HCT116 (cell line): ENCODE measurements at regions of chr2 and their contacts with region 1.

Region 1: DNA sequence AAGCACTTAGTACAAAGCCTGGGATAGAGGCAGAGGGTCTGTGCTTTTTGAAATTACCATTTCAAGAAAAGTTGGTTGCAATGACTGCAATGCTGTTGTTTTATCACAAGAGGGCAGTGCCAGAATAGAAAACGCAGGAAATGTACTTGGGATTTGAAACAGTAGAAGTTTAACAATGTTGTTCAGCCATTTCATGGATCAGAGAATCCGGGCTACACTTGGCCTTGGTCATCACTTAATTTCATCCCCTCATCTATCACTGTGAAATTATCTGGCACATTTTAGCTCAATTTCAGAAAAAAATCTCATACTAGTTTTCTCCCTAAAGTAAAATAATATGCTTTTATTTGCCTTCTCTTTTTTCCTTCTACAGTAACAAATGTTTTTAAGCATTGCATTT is 70.8 kb downstream of the RAPGEF4 start:
- DNase-seq: peak; percentile 37
- ATAC-seq: peak; percentile 62
- H3K4me3 ChIP-seq: no peak overlapping the region
- H3K27ac ChIP-seq: no peak overlapping the region
- H3K4me1 ChIP-seq: no peaks in the 10 kb centered on the region
- H3K27me3 ChIP-seq: no peaks in the 10 kb centered on the region
- CTCF ChIP-seq: peak; percentile 81 to 92 (median 88)
- POLR2A ChIP-seq: no peak
- RAD21 ChIP-seq: peak; percentile 90

Region 2: DNA sequence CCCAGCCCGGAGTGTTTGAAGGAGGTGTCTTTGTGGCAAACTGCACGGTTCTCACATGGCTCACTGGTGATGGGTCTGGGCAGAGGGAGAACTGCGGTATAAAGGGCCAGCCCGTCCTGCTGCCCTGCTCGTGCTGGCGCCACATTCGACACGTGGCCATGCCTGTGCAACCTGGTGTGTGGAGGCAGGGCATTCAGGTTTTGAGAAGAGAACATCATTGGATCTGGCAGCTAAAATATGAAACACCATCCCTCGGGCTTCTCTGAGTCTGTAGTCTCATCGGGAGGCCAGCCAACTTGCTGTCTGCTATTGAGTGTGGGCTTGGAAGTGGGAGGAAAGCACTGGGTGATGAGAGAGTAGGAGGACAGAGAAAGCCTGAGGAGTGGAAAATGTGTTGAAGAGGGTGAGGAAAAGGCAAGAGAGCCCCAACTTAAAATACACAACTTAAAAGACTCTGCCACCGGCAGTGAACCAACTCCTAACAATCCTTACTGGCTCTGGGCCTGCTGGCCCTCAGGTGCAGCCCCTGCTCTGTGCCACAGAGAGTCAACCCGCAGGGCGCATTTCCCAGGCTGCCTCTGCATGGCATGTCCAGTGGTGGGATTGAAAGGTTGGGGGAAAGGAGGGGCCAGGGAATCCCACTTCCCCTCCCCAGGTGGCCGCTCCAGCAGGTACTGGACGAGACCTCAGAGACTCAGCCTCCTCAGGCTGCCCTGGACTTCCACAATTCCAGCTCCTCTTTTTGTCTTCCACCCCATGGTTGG is 591.1 kb before region 1 on chr2:
- CTCF ChIA-PET with region 1: no interaction called
- POLR2A ChIA-PET with region 1: no interaction called
- RAD21 ChIA-PET with region 1: no interaction called
- intact Hi-C with region 1: no loop called
- DNase-seq: no peak
- ATAC-seq: no peak
- H3K4me3 ChIP-seq: no peak overlapping the region
- H3K27ac ChIP-seq: no peak overlapping the region
- H3K4me1 ChIP-seq: no peaks in the 10 kb centered on the region
- H3K27me3 ChIP-seq: no peaks in the 10 kb centered on the region
- CTCF ChIP-seq: no peak
- POLR2A ChIP-seq: no peak
- RAD21 ChIP-seq: no peak

Region 3: DNA sequence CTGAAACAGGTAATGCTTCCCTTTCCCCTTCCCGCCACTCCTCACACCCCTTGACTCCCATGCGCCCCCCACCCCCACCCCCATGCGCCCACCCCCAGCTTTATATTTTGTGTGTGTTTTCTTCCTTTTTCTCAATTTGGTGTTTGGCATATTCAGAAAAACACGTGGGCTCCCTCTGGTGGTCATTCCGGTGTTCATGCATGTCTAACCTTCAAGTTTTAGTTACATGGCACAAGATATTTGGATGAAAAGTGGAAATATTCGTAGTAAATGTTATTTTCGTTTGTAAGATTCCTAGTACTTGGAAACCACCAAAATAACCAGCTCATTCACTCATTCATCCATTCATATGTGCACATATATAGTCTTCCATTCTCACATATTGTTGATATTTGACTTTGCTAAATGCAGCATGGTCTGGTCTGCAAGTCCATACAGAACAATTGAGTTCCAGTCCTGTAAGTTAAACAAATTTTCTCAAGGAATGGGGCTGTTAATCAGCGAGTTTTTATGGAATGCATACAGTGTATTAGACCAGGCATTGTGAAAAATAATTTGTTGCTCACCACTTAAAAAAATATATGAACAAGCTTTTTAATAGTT is 125.5 kb after region 1 on chr2:
- CTCF ChIA-PET with region 1: interaction called, 24 read pairs
- POLR2A ChIA-PET with region 1: no interaction called
- RAD21 ChIA-PET with region 1: no interaction called
- intact Hi-C with region 1: loop called (anchors 1 kb)
- DNase-seq: peak; percentile 52
- ATAC-seq: peak; percentile 82
- H3K4me3 ChIP-seq: no peak overlapping the region
- H3K27ac ChIP-seq: no peak overlapping the region
- H3K4me1 ChIP-seq: peaks cover 2 to 6% of the 10 kb centered on the region in 2 experiments; a peak in 3 of 4 replicates
- H3K27me3 ChIP-seq: no peaks in the 10 kb centered on the region
- CTCF ChIP-seq: peak; percentile 68 to 73 (median 72); a peak in 5 of 6 replicates
- POLR2A ChIP-seq: no peak
- RAD21 ChIP-seq: peak; percentile 68

Region 4: DNA sequence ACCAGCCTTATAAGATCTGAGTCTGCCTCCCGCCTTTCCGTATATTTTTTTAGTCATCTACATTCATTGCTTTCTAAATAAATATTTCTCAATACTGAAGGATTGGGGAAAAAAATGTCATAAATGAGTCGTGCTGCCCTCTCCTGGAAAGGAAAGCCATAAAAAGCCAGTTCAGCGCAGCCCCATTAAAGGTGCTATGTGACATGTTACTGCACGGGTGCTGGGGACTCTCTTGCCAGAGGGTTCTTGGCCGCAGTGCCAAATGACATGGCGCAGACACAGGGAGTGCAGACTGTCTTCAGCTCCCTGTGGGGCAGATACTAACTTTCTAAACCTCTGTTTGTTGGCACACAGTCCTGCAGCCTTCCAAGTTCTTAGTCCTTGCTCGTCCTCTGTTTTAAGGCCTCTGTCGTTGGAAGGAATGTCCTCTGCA is 215.5 kb after region 1 on chr2:
- CTCF ChIA-PET with region 1: interaction called, 4 read pairs
- POLR2A ChIA-PET with region 1: no interaction called
- RAD21 ChIA-PET with region 1: no interaction called
- intact Hi-C with region 1: loop called (anchors 1 kb)
- DNase-seq: no peak
- ATAC-seq: peak; percentile 82
- H3K4me3 ChIP-seq: no peak overlapping the region
- H3K27ac ChIP-seq: no peak overlapping the region
- H3K4me1 ChIP-seq: no peaks in the 10 kb centered on the region
- H3K27me3 ChIP-seq: no peaks in the 10 kb centered on the region
- CTCF ChIP-seq: peak; percentile 30 to 58 (median 54); a peak in 3 of 6 replicates
- POLR2A ChIP-seq: no peak
- RAD21 ChIP-seq: peak; percentile 56; the same call in 1 of the 2 replicates

Region 5: DNA sequence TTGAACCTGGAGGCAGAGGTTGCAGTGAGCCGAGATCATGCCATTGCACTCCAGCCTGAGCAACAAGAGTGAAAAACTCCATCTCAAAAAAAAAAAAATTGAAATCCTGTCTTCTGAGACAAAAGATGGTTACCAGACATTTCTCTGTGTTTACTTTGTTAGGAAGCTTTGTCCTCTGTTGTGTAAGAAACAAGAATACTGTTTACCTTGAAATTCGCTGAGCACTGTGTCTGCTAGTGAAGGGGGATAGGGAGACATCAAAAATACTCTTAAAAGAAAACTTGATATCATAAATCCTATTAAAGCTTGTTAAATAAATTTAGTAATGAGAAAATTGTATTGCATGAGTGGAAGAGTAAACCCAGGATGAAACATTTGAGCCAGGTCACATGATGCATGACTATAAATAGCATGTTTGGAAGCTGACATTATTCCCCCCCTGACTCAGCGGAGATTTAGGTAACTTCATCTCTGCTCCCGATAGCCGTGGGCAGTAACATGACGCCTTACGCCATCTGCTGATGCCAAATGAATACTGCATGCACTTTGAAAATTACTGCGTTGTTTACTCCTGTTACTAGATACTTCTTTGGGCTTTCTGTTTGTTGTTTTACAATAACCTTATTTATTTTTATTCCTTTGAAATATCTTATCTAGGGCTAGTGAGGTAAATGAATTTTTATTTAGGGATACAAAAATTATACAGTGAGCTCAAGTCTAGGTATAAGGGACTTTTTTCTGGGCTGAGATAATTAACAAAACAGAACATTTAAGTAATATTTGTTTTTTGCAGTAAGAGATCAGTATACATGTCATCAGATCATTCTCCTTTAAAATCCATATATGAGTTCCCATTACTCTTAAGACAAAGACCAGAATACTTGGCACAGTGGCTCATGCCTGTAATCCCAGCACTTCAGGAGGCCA is 404.0 kb after region 1 on chr2:
- CTCF ChIA-PET with region 1: interaction called, 4 read pairs
- POLR2A ChIA-PET with region 1: no interaction called
- RAD21 ChIA-PET with region 1: no interaction called
- intact Hi-C with region 1: loop called (anchors 2 kb)
- DNase-seq: peak; percentile 65
- ATAC-seq: peak; percentile 95
- H3K4me3 ChIP-seq: no peak overlapping the region
- H3K27ac ChIP-seq: no peak overlapping the region
- H3K4me1 ChIP-seq: peaks cover 0 to 5% of the 10 kb centered on the region in 2 experiments; a peak in 2 of 4 replicates
- H3K27me3 ChIP-seq: no peaks in the 10 kb centered on the region
- CTCF ChIP-seq: peak; percentile 76 to 91 (median 86)
- POLR2A ChIP-seq: no peak
- RAD21 ChIP-seq: peak; percentile 97